Astrocyte of the spinal cord (primary cell): ENCODE measurements at regions of chr14 and their contacts with region 1.

Region 1: DNA sequence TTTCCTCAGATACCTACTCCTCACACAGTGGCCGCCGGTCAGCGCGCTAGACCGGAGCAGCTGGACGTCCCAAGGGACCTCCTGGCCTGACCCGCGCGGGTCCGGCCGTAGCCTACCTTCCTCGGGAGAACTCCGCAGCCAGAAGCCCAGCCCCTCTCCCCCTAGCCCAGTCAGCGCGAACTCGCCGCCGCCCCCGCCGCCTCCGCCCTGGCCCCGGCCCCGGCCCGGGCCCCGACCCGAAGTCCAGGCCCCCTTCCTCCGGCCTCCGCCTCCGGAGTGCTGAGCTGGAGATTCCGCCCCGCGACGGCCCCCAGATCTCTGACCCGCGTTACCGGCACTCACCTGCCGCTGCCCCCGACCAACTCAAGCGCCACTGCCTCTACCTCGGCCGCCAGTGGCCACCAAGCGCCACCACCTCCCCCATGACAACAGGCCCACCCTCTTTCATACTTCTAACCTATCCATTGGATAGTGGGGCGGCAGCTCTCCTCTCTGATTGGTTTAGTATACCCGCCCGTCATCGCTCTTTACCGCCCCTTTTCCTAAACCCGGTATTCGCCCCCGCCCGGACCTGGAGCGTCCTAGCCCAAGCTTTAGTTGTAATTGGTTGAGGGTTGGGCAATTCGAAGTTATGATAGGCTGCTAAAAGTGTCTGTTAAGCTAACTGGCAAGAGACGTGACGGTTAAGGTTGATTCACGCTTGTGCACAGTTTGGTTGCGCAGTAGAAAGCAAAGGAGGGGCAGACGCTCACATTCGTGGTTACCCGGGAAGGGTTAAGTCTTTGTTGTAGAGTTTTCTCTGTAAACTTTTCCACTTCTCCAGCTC is at the start of gene NUMB:
- DNase-seq: peak; percentile 100
- H3K4me3 ChIP-seq: peak within 1 kb of the TSS; percentile 98
- CTCF ChIP-seq: no peak

Region 2: DNA sequence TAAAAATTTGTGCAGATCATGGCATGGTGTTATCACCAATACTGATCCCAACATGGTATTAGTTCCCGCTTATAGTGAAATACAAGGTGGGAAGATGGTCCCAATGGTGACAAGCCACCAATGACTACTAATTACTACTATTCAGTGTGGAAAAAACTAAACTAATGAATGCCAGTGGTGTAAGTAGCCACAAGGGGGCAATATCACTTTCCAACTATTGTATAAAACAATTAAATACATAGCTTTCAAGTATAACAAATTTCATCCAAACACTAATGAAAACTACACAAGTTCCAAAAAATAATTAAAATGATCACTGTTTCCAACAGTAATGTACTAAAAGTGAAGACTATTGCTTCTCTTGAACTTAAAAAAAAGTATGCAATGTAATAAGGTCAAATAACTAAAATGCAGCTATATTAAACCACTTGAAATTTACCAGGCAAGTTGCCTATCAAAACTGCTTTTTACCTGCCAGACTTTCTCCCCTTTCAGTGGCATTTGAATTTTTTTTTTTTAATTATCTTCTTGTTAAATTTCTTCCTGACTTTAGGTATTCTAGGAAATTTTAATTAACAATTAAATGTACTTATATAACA is 163.1 kb before region 1 on chr14:
- in situ Hi-C with region 1: loop called (anchors 25 kb)
- DNase-seq: peak; percentile 60
- H3K4me3 ChIP-seq: no peak overlapping the region
- CTCF ChIP-seq: peak; percentile 61

Region 3: GRCh38 chr14:73553845-73554244 is 95.5 kb after region 1 on chr14:
- in situ Hi-C with region 1: no loop called
- DNase-seq: no peak
- H3K4me3 ChIP-seq: no peak overlapping the region
- CTCF ChIP-seq: no peak

Region 4: GRCh38 chr14:73576391-73576790 is 118.0 kb after region 1 on chr14:
- in situ Hi-C with region 1: no loop called
- DNase-seq: no peak
- H3K4me3 ChIP-seq: no peak overlapping the region
- CTCF ChIP-seq: no peak

Region 5: DNA sequence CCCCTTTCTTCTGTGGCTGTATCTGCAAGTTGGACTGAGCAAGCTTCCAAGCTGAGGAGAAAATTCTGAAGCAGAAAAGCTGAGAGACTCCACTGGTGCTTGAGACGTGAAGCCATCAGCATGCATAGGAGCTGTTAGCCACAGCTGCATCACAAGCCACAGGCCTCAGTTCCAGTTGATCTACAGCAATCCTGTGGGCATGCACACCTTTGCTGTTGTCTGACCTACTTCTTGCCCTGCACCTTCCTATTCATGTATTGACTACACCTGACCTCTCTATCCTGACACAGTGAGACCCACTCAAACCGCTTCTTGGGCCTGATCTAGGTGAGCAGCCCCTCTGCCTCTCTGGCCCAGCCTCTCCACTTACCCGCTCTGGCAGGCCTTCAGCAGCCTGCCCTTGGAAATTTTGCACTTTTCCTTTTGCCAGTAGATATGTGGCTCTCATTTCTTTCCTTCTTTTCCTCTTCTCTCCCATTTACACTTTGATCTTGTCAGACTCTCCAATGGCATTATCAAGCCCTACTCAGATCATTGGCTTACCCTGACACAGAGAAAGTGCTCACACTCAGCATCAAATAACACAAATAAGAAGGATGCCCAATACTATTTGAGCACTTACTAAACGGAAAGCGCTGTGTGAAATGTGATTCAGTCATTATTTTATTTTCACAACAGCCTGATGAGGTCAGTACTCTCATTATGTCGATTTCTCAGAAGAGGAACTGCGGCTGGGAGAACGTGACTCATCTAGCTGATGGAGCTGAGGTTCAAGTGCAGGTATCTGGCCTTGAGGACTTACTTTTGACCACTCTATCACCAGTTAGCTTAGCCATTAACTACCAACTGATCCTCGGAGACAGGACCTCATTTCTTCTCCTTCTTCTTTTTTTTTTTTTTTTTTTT is 371.4 kb after region 1 on chr14:
- in situ Hi-C with region 1: no loop called
- DNase-seq: peak; percentile 92
- H3K4me3 ChIP-seq: no peak overlapping the region
- CTCF ChIP-seq: no peak